H1 (cell line): ENCODE measurements at regions of chr3 and their contacts with region 1.

Region 1: GRCh38 chr3:33074217-33075067 is 22.5 kb downstream of the GLB1 start:
- DNase-seq: peak in 1 of 2 experiments; percentile 76
- H3K4me3 ChIP-seq: no peak overlapping the region
- H3K27ac ChIP-seq: no peak overlapping the region
- H3K4me1 ChIP-seq: peaks cover 0 to 2% (median 0%) of the 10 kb centered on the region in 4 experiments; a peak in 1 of 7 replicates
- H3K27me3 ChIP-seq: no peaks in the 10 kb centered on the region
- CTCF ChIP-seq: peak; percentile 81 to 98 (median 85)
- EP300 ChIP-seq: no peak
- POLR2A ChIP-seq: no peak
- RAD21 ChIP-seq: peak; percentile 76 to 79

Region 2: GRCh38 chr3:32781210-32781968 is 293.1 kb before region 1 on chr3:
- CTCF ChIA-PET with region 1: no interaction called
- POLR2A ChIA-PET with region 1: no interaction called
- DNase-seq: peak; percentile 86 to 94
- H3K4me3 ChIP-seq: peak overlapping the region; percentile 45 to 65 (median 51)
- H3K27ac ChIP-seq: peak overlapping the region; percentile 94
- H3K4me1 ChIP-seq: peaks cover 16 to 31% (median 22%) of the 10 kb centered on the region in 4 experiments; a peak in 6 of 7 replicates
- H3K27me3 ChIP-seq: no peaks in the 10 kb centered on the region
- CTCF ChIP-seq: peak; percentile 77 to 88 (median 80)
- EP300 ChIP-seq: peak in 1 of 2 experiments; percentile 92; a peak in 2 of 3 replicates
- POLR2A ChIP-seq: peak; percentile 51 to 82; a peak in 2 of 3 replicates
- RAD21 ChIP-seq: peak; percentile 63 to 75

Region 3: GRCh38 chr3:32947789-32948238 is 126.6 kb before region 1 on chr3:
- CTCF ChIA-PET with region 1: interaction called, 57 read pairs
- POLR2A ChIA-PET with region 1: no interaction called
- DNase-seq: peak; percentile 61 to 99
- H3K4me3 ChIP-seq: no peak overlapping the region
- H3K27ac ChIP-seq: no peak overlapping the region
- H3K4me1 ChIP-seq: peaks cover 0 to 4% (median 1%) of the 10 kb centered on the region in 4 experiments; a peak in 2 of 7 replicates
- H3K27me3 ChIP-seq: no peaks in the 10 kb centered on the region
- CTCF ChIP-seq: peak; percentile 67 to 95 (median 90)
- EP300 ChIP-seq: no peak
- POLR2A ChIP-seq: no peak
- RAD21 ChIP-seq: peak; percentile 98

Region 4: GRCh38 chr3:33030802-33031201 is 43.6 kb before region 1 on chr3:
- CTCF ChIA-PET with region 1: interaction called, 13 read pairs
- POLR2A ChIA-PET with region 1: interaction called, 3 read pairs
- DNase-seq: no peak
- H3K4me3 ChIP-seq: no peak overlapping the region
- H3K27ac ChIP-seq: no peak overlapping the region
- H3K4me1 ChIP-seq: no peaks in the 10 kb centered on the region; a peak in 1 of 7 replicates
- H3K27me3 ChIP-seq: no peaks in the 10 kb centered on the region
- CTCF ChIP-seq: peak in 1 of 3 experiments; percentile 28; a peak in 2 of 4 replicates
- EP300 ChIP-seq: no peak
- POLR2A ChIP-seq: no peak
- RAD21 ChIP-seq: peak; percentile 29 to 35

Region 5: DNA sequence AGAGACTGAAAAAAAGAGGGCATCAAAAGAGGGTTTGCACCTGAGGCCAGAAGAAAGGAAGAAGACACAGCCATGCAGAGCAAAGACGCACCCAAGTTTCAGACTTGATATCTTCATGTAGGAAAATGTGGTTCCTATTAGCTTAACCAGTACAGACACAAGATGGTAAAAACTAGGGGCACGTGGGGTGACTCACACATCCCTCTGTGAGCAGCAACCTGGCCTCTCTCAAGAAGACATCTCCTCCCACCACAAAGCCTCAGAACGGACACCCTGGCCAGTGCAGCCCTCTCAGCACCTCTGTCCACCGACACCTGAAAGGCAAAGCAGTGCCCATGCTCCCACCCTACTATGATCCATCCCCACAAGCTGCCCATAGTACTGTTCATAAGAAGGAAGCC is 10.8 kb before region 1 on chr3:
- CTCF ChIA-PET with region 1: interaction called, 51 read pairs
- POLR2A ChIA-PET with region 1: interaction called, 6 read pairs
- DNase-seq: no peak
- H3K4me3 ChIP-seq: no peak overlapping the region
- H3K27ac ChIP-seq: no peak overlapping the region
- H3K4me1 ChIP-seq: no peaks in the 10 kb centered on the region
- H3K27me3 ChIP-seq: no peaks in the 10 kb centered on the region
- CTCF ChIP-seq: no peak
- EP300 ChIP-seq: no peak
- POLR2A ChIP-seq: no peak
- RAD21 ChIP-seq: no peak

Region 6: DNA sequence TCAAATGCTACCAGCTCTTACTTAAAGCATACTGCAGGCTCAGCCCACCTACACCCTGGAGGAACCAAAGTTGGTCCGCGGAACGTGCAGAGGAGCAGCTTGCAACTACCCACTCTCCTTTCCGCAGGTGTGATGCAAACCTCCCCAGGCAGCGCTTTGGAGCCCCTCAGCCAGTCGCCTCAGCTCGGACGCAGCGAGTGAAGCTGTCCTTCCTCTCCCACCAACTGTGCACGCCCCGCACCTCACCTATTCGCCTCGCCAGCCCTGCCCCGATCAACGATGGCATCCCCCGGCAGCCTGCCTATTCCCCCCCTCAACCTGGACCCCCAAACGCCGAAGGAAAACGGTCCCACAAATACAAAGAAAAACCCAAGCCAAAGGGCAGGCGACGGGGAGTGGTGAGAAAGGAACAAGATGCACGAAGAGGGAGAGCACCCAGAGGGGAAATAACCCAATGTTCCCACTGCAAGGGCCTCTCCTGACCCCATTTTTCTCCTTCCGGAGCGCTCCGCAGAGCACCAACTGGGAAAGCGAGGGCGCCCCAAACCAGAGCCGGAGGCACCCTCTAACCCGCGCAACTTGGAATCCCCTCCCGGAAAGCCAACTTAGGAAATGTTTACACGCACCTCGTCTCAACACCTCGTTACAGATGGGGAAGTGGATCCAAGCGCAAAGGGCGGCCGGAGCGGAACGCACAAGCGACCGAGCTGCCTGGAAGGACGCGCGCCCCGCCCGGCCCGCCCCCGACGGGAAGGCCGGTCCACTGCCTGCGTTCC is 21.8 kb after region 1 on chr3:
- CTCF ChIA-PET with region 1: interaction called, 33 read pairs
- POLR2A ChIA-PET with region 1: interaction called, 6 read pairs
- DNase-seq: peak in 1 of 2 experiments; percentile 58
- H3K4me3 ChIP-seq: peak overlapping the region; percentile 68 to 90 (median 86)
- H3K27ac ChIP-seq: no peak overlapping the region; the same call in 1 of the 2 replicates
- H3K4me1 ChIP-seq: peaks cover 0 to 3% (median 2%) of the 10 kb centered on the region in 4 experiments; a peak in 4 of 7 replicates
- H3K27me3 ChIP-seq: no peaks in the 10 kb centered on the region; a peak in 2 of 7 replicates
- CTCF ChIP-seq: no peak
- EP300 ChIP-seq: no peak
- POLR2A ChIP-seq: no peak
- RAD21 ChIP-seq: no peak